ENCODE measurements at regions of chr18 and their contacts with region 1.

Region 1: DNA sequence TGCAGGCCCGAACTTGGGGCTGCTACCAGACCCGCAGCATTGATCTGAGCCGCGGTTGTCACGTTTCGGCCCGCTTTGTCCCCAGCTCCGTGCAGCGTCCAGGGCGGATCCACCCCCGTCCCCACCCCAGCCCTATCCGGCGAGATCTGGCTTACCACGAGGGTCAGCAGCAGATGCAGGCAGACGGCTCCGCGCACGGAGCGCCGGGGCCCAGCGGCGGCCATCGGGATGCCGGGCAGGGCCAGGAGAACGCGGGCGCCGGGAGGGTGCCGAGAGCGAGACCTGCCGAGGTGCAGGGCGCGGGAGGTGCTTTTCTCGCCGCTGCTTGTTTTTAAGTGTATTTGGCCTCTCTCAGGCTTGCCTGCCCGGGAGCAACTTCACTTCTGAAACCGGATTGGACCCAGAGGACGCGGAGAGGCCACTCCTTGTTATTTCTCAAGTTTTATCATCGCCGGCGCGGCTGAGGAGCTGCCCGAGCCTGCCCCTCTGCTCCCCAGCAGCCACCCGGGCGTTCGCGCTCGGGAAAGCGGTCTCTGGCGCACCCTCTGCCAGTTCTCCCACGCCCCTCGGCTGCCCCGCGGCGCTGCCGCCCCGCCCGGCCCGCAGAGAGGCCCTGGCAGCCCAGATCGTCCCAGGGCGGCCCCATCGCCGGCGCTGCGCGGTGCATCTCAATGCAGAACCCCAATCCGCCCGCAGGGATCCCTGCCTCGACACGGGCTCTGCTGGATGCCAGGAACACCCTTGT is at the start of gene DSC3:
- DNase-seq: peak; percentile 72

Region 2: GRCh38 chr18:31101183-31102024 is 58.8 kb after region 1 on chr18:
- CTCF ChIA-PET with region 1: interaction called, 4 read pairs
- POLR2A ChIA-PET with region 1: interaction called, 62 read pairs
- DNase-seq: peak; percentile 73

Region 3: DNA sequence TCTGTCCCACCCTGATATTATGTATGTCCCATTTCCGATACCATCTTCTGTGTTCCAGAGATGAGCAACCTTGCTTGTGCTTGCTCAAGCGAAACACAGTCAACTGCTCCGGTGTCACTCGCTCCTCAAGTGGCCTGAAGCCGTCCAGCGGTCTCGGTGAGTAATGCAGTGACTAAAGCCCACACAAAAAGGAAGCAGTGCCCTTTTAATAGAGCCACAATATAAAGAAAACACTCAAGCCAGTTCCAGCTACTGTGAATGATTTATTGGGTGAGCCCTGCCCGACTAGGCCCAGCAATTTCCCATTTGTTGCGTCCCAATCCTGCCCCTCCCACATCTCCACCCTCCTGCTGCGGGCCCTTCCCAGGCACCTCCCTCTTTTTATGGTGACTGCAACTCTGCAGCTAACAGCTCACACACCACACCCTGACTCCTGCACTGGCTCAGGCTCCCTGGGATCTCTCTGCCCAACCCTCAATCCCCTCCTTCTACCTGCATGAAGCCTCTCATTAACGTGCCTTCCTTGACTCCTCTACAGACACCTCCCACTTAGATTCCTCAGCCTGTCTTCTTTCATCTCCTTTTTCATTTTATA is 164.3 kb after region 1 on chr18:
- CTCF ChIA-PET with region 1: interaction called, 6 read pairs
- POLR2A ChIA-PET with region 1: interaction called, 13 read pairs
- DNase-seq: peak; percentile 95

Measured in HEK293T (cell line).